ENCODE measurements at regions of chr10 and their contacts with region 1.

Region 1: DNA sequence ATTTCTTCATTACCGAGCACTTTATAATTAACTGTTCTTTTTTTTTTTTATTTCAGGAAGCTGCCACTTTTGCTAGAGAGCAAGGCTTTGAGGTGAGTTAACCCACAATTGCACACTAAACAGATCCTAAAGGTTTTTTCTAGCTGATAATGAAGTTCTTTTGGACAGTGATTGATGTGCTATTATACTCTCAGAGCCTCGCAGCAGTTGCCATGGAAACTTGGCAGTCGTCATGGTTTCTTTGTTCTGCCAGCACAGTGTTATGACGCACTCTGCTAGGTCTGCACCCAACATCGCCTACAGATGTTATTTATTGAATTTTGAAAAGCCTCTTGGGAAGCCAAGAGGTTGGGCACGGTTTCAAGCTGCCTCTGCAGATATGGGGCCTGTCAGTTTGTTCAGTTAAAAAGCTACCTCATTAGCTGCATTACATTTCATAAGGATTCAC is 237.2 kb upstream of the KAT6B start:
- DNase-seq: peak; percentile 91
- H3K4me3 Mint-ChIP-seq: no peak overlapping the region
- H3K27ac Mint-ChIP-seq: peak overlapping the region; percentile 58
- H3K4me1 Mint-ChIP-seq: peaks cover 68% of the 10 kb centered on the region
- H3K27me3 Mint-ChIP-seq: no peaks in the 10 kb centered on the region

Region 2: GRCh38 chr10:74262856-74263255 is 326.4 kb before region 1 on chr10:
- CTCF ChIA-PET with region 1: no interaction called
- POLR2A ChIA-PET with region 1: no interaction called
- intact Hi-C with region 1: loop called (anchors 5 kb)
- DNase-seq: no peak
- H3K4me3 Mint-ChIP-seq: no peak overlapping the region
- H3K27ac Mint-ChIP-seq: no peak overlapping the region
- H3K4me1 Mint-ChIP-seq: peaks cover 7% of the 10 kb centered on the region
- H3K27me3 Mint-ChIP-seq: no peaks in the 10 kb centered on the region

Region 3: DNA sequence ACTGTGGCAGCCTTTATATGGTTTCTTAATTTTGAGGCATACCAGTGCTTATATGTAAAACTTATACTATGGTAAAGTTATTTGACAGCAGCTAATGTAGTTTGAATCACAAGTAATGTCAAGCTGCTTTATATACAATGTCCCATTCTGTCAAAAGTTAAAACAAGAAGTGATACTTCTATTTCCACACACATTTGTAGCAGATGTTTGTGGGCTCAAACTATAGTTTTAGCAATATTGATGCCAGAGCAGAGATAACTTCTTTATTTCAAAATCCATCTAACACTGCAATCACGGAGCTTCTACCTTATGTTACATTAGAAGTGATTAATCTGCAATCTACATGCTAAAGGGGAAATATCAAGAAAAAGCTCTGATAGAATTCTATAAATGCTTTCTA is 288.6 kb before region 1 on chr10:
- CTCF ChIA-PET with region 1: no interaction called
- POLR2A ChIA-PET with region 1: no interaction called
- intact Hi-C with region 1: no loop called
- DNase-seq: no peak
- H3K4me3 Mint-ChIP-seq: no peak overlapping the region
- H3K27ac Mint-ChIP-seq: no peak overlapping the region
- H3K4me1 Mint-ChIP-seq: no peaks in the 10 kb centered on the region
- H3K27me3 Mint-ChIP-seq: no peaks in the 10 kb centered on the region

Region 4: GRCh38 chr10:74474022-74474713 is 115.1 kb before region 1 on chr10:
- CTCF ChIA-PET with region 1: no interaction called
- POLR2A ChIA-PET with region 1: no interaction called
- intact Hi-C with region 1: no loop called
- DNase-seq: no peak
- H3K4me3 Mint-ChIP-seq: no peak overlapping the region
- H3K27ac Mint-ChIP-seq: no peak overlapping the region
- H3K4me1 Mint-ChIP-seq: no peaks in the 10 kb centered on the region
- H3K27me3 Mint-ChIP-seq: no peaks in the 10 kb centered on the region

Region 5: GRCh38 chr10:74500816-74501215 is 88.4 kb before region 1 on chr10:
- CTCF ChIA-PET with region 1: no interaction called
- POLR2A ChIA-PET with region 1: interaction called, 3 read pairs
- intact Hi-C with region 1: loop called (anchors 1 kb)
- DNase-seq: no peak
- H3K4me3 Mint-ChIP-seq: no peak overlapping the region
- H3K27ac Mint-ChIP-seq: no peak overlapping the region
- H3K4me1 Mint-ChIP-seq: peaks cover 46% of the 10 kb centered on the region
- H3K27me3 Mint-ChIP-seq: no peaks in the 10 kb centered on the region

Region 6: DNA sequence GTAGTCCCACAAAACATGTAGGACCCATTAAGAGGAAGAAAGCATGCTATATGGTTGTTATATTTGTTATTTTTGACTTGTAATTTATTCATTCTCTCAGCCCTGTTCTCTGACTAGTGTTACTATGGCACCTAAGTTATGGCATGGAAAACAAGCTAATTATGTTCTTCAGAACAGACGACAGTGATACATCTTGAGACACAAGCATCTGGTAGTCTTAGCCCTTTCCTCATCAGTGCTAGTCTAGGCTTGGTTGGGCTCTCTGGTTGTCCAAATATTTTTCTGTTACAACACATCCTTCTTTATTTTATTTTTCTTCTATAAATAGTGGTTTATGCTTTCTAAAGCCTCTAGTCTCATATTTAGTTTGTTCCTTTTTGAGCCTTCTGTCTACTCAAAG is 71.2 kb before region 1 on chr10:
- CTCF ChIA-PET with region 1: no interaction called
- POLR2A ChIA-PET with region 1: no interaction called
- intact Hi-C with region 1: no loop called
- DNase-seq: no peak
- H3K4me3 Mint-ChIP-seq: no peak overlapping the region
- H3K27ac Mint-ChIP-seq: no peak overlapping the region
- H3K4me1 Mint-ChIP-seq: no peaks in the 10 kb centered on the region
- H3K27me3 Mint-ChIP-seq: no peaks in the 10 kb centered on the region

Region 7: DNA sequence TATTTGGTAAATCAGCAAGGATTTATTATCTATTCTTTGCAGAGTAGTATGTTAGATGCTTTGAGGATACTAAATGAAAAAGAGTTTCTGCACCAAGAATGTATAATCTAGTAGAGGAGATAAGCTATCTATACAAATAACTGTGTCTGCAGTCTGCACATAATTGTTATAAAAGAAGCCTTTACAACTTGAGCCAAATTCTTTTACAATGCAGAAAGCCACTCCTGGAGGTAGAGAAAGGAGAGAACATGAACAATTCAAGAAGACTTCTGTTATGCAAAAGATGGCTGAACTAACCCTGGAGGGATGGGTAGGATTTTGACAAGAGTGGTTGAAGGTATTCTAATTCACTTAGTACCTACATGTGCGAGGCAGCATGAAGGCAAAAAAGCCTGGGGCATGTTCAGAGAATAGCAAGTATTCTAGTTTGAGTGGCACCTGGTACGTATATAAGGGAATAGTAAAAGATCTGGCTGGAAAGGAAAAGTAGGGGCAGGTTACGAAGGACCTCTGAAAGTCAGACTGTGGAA is 14.0 kb before region 1 on chr10:
- CTCF ChIA-PET with region 1: no interaction called
- POLR2A ChIA-PET with region 1: no interaction called
- intact Hi-C with region 1: no loop called
- DNase-seq: no peak
- H3K4me3 Mint-ChIP-seq: no peak overlapping the region
- H3K27ac Mint-ChIP-seq: no peak overlapping the region
- H3K4me1 Mint-ChIP-seq: peaks cover 12% of the 10 kb centered on the region
- H3K27me3 Mint-ChIP-seq: no peaks in the 10 kb centered on the region

Region 8: DNA sequence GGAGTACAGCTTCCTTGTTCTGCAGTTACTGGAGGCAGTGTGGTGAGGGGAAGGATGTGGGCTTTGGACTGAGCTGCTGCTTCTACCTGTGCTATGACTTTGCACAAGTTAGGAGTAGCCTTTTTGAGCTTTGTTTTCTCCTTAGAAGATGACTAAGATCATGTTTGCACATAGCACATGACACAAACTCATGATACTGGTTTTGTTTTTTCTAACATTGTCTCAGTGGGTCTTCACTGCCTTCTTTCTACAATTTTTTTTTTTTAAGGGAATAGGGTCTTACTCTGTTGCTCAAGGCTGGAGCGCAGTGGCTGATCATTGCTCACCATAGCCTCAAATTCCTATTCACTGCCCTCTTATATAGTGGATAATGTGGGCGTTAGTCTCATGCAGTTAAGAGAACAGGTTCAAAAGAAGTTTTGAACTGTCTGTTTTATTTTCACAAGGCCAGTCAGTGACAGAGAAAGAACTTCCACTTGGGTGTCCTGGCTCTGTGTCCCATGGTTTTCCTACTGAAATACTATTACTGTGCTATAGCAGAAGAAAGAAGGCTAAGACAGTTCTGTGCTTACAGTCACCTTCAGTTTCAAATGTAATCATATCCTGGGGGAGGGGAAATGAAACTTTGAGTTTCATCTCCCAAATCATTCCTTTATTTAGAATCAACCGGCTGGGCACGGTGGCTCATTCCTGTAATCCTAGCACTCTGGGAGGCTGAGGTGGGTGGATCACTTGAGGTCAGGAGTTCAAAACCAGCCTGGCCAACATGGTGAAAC is 309.1 kb after region 1 on chr10:
- CTCF ChIA-PET with region 1: no interaction called
- POLR2A ChIA-PET with region 1: no interaction called
- intact Hi-C with region 1: loop called (anchors 2 kb)
- DNase-seq: peak; percentile 69
- H3K4me3 Mint-ChIP-seq: peak overlapping the region; percentile 10
- H3K27ac Mint-ChIP-seq: peak overlapping the region; percentile 84
- H3K4me1 Mint-ChIP-seq: peaks cover 55% of the 10 kb centered on the region
- H3K27me3 Mint-ChIP-seq: no peaks in the 10 kb centered on the region

Region 9: GRCh38 chr10:75042292-75042974 is 453.2 kb after region 1 on chr10:
- CTCF ChIA-PET with region 1: no interaction called
- POLR2A ChIA-PET with region 1: interaction called, 3 read pairs
- intact Hi-C with region 1: loop called (anchors 1 kb)
- DNase-seq: peak; percentile 42
- H3K4me3 Mint-ChIP-seq: peak overlapping the region; percentile 12
- H3K27ac Mint-ChIP-seq: peak overlapping the region; percentile 88
- H3K4me1 Mint-ChIP-seq: peaks cover 59% of the 10 kb centered on the region
- H3K27me3 Mint-ChIP-seq: no peaks in the 10 kb centered on the region

Region 10: DNA sequence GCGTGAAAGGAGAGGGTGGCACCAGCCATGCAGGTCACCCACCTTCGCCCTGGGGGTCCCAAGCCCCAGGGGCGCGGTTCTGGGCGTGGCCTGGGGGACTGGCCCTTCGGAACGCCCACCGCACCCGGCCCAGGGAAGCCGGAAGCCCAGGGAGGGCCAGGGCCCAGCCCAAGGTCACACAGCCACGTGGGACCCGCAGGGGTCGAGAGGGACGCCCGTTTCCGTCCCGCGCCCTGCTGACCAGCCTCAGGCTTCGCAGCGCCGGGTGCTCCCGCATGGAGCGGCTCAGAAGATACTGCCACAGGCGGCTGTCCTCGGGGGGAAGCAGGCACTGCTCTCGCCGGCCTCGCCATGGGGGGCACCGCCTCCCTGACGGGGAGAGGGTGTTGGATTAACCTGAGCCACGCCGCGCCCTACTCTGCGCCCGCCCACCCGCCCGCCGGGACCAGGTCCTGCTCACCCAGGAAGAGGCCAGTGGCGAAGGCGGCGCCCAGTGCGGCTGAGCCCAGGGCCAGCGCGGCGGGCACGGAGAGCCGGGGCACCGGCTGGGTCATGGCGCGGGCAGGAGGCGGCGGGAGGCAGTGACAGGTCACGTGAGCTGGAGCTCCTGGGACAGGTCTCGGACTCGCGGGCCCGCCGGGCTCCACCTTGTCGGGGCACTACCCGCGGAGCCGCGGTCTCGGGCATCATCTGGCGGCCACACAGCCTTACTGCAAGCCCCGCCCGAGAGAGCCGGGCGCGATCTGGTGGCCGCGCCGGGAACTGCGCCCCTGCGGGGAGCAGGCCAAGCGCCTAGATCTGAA is 646.3 kb after region 1 on chr10 and contains the start of gene COMTD1:
- CTCF ChIA-PET with region 1: no interaction called
- POLR2A ChIA-PET with region 1: no interaction called
- intact Hi-C with region 1: loop called (anchors 5 kb)
- DNase-seq: peak; percentile 96
- H3K4me3 Mint-ChIP-seq: peak within 1 kb of the TSS; percentile 73
- H3K27ac Mint-ChIP-seq: peak within 1 kb of the TSS; percentile 65
- H3K4me1 Mint-ChIP-seq: peaks cover 21% of the 10 kb centered on the region
- H3K27me3 Mint-ChIP-seq: no peaks in the 10 kb centered on the region
- total RNA-seq, gene COMTD1: 40.0 to 41.3 TPM